Dorsolateral prefrontal cortex (tissue), 120 donors: ENCODE measurements at regions of chr7 and their contacts with region 1.

Region 1: DNA sequence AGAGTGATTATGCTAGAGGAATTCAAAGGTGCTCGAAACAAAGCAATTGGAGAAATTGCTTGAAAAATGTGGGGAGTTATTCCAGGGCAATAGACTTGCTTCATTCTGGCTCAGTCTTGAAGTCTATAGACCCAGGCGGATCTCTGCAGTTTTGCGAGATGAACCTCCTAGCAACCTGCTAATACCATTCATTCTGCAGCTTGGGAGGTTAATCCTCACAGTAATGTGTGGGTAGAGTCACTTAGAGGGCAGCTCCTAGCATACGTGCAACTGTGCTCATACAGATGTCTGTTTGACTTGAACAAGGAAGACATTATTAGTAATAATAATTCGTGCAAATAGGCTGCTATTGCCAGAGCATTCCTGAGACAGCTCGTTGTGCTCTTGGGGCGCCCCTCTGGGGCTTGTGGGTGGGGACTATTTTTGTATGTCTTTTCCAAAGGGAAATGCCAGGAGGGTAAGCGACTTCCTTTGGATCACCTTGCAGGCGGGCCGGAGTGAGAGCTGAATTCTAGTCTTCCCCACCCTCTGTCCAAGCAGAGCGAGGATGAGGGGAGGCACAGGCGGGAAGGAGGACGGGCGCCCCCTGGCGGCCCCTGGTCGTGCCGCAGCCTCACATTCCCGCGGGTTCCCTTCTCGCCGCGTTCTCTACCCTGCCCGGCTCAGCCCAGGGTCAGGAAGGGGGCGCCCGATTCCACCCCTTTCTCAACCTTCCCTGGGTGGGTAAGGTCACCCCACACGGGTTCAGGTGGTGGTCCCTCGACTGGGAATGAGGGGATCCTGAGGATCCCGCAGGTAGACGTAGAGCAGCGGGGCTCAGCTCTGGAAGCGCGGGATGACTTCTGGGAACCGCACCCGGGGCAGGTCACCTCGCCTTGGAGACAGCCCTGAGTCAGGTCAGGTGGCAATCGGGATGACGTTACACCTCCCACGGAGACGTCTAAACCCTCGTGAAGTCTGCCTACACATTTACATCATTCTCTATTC is 241.5 kb downstream of the PHTF2 start:
- DNase-seq: no peak
- H3K4me3 ChIP-seq: no peak overlapping the region
- H3K27ac ChIP-seq: peak overlapping the region in 1 of 59 donors; percentile 3
- H3K27me3 ChIP-seq: no peaks in the 10 kb centered on the region
- CTCF ChIP-seq: peak in 43 of 56 donors; percentile 11 to 61 (median 37)

Region 2: DNA sequence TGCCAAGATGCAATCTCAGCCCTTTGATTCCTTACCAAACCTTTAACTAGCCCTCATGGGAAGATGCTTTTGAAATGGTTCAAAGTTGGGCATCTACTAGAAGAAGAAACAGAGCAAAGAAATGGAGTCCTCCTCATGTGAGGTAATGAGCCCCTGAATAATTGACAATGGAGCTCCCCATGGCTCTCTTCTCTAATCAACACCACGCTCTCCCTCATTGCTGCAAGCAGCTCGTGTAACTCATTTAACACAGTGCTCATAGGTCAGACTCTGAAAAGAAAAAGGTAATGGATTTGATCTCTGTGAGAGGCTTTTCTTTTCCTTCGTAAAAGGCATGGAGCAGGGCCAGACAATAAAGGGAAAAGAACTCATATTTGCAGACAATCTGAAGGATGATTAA is 71.3 kb after region 1 on chr7:
- intact Hi-C with region 1: loop called in 1 of 2 experiments (anchors 10 kb)
- DNase-seq: no peak
- H3K4me3 ChIP-seq: no peak overlapping the region
- H3K27ac ChIP-seq: peak overlapping the region in 1 of 59 donors; percentile 9
- H3K27me3 ChIP-seq: no peaks in the 10 kb centered on the region
- CTCF ChIP-seq: no peak